Panc1 (cell line): ENCODE measurements at regions of chr11 and their contacts with region 1.

Region 1: GRCh38 chr11:23455306-23455891 is 595.1 kb upstream of the CCDC179 start:
- DNase-seq: no peak
- ATAC-seq: no peak
- H3K4me3 ChIP-seq: no peak overlapping the region
- H3K27ac ChIP-seq: no peak overlapping the region
- H3K4me1 ChIP-seq: no peaks in the 10 kb centered on the region
- H3K27me3 ChIP-seq: no peaks in the 10 kb centered on the region
- CTCF ChIP-seq: no peak

Region 2: DNA sequence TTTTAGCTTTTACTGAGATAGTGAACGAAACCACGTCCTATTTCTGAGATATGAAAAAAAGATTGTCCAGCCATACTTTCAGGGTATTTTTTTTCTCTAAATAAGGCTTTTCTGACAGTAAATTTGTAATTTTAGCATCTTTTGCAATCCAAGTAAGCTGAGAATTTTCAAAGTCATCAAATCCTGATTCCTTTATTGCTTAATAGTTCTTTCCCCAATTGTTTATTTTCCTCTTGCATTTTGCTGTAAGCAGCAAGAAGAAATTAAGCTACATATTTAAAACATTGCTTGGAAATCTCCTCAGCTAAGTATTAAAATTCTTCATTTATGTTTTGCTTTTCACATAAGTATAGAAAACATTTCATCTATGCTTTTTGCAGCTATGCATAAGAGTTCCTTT is 101.8 kb before region 1 on chr11:
- CTCF ChIA-PET with region 1: interaction called, 10 read pairs
- POLR2A ChIA-PET with region 1: no interaction called
- in situ Hi-C with region 1: no loop called
- intact Hi-C with region 1: no loop called
- DNase-seq: no peak
- ATAC-seq: no peak
- H3K4me3 ChIP-seq: no peak overlapping the region
- H3K27ac ChIP-seq: no peak overlapping the region
- H3K4me1 ChIP-seq: no peaks in the 10 kb centered on the region
- H3K27me3 ChIP-seq: no peaks in the 10 kb centered on the region
- CTCF ChIP-seq: no peak

Region 3: DNA sequence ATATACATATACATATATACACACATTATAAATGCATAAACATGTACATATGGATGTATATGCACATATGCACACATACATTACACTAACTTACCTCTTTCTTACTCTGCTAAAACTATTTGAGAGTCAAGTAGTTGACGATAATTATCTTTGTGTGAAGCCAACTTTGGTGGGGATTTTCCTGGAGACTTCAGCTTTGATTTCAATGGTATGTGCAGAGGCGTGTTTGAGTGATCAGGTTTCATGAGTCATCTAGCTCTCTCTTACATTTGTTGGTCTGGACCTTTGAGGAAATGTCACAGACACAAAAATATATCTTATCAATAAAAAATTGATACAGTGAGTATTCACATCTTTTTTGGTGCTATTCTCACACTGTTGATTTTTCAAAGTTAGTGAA is 272.4 kb after region 1 on chr11:
- CTCF ChIA-PET with region 1: no interaction called
- POLR2A ChIA-PET with region 1: no interaction called
- in situ Hi-C with region 1: no loop called
- intact Hi-C with region 1: no loop called
- DNase-seq: no peak
- ATAC-seq: no peak
- H3K4me3 ChIP-seq: no peak overlapping the region
- H3K27ac ChIP-seq: no peak overlapping the region
- H3K4me1 ChIP-seq: no peaks in the 10 kb centered on the region
- H3K27me3 ChIP-seq: no peaks in the 10 kb centered on the region
- CTCF ChIP-seq: no peak

Region 4: DNA sequence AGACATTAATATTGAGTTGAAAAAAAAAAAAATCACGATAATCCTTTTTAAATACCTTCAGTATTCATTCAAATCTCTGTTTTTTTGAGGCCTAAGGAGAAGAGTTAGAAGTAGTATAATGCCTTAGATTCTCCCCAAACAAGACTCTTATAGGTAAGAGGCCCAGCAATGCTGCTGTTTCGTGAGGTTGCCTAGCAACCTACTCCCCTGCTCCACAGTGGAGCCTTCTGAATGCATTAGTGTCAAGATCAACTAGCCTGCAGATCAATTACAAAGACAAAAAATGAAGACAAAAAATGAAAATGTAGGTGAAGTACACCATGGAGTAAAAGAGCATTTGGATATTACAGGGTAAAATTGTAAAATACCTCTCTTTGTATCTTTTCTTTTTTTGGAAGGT is 811.6 kb after region 1 on chr11:
- CTCF ChIA-PET with region 1: no interaction called
- POLR2A ChIA-PET with region 1: no interaction called
- in situ Hi-C with region 1: no loop called
- intact Hi-C with region 1: no loop called
- DNase-seq: no peak
- ATAC-seq: no peak
- H3K4me3 ChIP-seq: no peak overlapping the region
- H3K27ac ChIP-seq: no peak overlapping the region
- H3K4me1 ChIP-seq: no peaks in the 10 kb centered on the region
- H3K27me3 ChIP-seq: no peaks in the 10 kb centered on the region
- CTCF ChIP-seq: no peak